ENCODE measurements at regions of chr9 and their contacts with region 1.

Region 1: DNA sequence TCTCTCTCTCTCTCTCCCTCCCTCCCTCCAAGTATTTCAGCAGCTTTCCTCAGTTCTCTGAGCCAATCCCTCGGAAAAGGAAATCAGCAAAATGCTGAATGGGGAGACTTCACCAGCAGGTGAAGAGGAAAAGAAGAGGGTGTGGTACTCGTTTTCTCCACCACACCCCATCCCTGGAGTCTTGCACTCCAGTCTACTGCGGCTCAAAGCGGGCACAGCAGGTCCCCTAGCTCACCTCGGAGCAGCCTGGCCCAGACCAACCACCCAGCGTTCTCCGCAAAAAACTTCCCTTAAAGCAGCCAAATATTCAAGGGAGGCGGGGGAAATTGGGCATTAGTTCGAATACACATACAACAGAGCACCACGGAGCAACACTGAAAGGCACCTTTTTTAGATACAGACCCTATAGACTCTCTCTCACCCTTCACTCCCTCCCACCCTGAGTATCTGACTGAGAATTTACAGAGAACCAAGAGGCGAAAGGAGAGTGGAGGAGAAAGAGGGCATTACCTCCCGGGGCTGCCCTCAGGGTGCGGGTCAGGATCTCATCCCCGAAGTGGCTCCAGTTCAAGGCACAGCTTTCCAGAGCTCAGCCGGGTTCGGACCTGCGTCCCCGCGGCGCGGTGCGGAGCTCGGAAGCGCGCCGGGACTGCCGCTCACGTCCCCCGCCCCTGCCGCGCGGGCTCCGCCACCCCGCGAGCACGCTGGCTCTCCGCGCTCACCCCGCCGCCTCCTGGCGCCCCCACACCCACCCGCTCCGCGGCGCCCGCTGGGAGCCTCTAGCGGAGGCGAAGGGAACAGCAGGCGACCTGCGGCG is 1638.5 kb upstream of the C9orf72 start:
- DNase-seq: peak; percentile 88
- H3K4me3 ChIP-seq: peak overlapping the region; percentile 82
- H3K27ac ChIP-seq: peak overlapping the region; percentile 91
- H3K4me1 ChIP-seq: peaks cover 31% of the 10 kb centered on the region
- H3K27me3 ChIP-seq: no peaks in the 10 kb centered on the region
- CTCF ChIP-seq: peak; percentile 65

Region 2: GRCh38 chr9:27726244-27727081 is 1485.3 kb before region 1 on chr9:
- CTCF ChIA-PET with region 1: no interaction called
- POLR2A ChIA-PET with region 1: no interaction called
- intact Hi-C with region 1: loop called (anchors 10 kb)
- DNase-seq: peak; percentile 88
- H3K4me3 ChIP-seq: no peak overlapping the region
- H3K27ac ChIP-seq: no peak overlapping the region
- H3K4me1 ChIP-seq: peaks cover 10% of the 10 kb centered on the region
- H3K27me3 ChIP-seq: peaks cover 3% of the 10 kb centered on the region
- CTCF ChIP-seq: peak; percentile 88

Region 3: DNA sequence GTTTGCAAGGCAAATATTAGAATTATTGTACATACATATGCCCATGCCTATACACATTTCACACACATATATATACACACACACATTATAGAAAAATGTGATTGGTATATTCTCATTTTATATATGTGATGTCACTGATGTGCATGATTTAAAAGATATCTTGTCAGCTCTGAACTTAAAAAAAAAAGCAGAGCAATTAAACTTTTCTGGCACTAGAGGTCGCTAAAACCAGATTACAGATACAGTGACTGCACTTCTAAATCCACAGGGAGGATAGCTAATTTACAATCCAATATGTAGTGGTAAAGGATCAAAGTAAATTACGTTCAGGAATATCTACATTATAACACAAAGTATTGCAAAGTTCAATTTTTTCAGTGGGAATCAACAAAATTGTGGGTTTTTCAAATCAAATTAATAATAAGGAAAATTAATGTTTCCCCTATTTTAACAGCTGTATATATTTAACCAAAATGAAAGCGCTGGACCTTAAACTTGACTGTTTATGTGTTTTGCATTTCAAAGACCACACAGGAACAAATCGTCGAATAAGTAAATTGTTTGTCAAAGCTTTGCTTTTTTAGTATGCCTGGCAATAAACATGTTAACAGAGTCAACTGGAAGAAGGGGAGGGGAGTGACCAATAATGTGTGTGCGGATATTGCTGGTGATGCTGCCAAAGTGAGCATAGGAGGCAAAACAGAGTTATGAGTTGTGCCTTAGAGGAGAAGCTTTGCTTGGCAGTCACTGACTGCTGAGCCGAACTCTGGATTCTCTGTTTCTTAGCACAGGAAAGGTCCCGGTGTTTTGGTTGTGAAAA is 437.2 kb before region 1 on chr9:
- CTCF ChIA-PET with region 1: interaction called, 3 read pairs
- POLR2A ChIA-PET with region 1: no interaction called
- intact Hi-C with region 1: loop called (anchors 5 kb)
- DNase-seq: peak; percentile 79
- H3K4me3 ChIP-seq: no peak overlapping the region
- H3K27ac ChIP-seq: peak overlapping the region; percentile 14
- H3K4me1 ChIP-seq: peaks cover 43% of the 10 kb centered on the region
- H3K27me3 ChIP-seq: no peaks in the 10 kb centered on the region
- CTCF ChIP-seq: peak; percentile 80

Region 4: DNA sequence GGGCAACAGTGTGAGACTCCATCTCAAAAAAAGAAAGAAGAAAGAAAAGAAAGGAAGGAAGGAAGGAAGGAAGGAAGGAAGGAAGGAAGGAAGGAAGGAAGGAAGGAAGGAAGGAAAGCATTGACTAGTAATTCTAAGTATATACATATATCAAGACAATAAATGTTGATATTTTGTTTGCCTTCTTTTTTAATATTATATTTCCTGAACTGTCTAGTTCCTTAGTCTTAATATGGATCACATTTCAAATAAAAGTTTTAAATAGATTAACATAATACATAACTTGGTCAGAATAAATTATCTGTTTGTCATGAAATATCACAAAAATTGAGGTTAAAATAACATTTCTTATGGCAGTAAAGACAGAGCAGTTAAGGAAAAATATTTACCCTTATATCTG is 190.2 kb before region 1 on chr9:
- CTCF ChIA-PET with region 1: no interaction called
- POLR2A ChIA-PET with region 1: no interaction called
- intact Hi-C with region 1: loop called (anchors 1 kb)
- DNase-seq: peak; percentile 84
- H3K4me3 ChIP-seq: peak overlapping the region; percentile 17
- H3K27ac ChIP-seq: peak overlapping the region; percentile 95
- H3K4me1 ChIP-seq: peaks cover 70% of the 10 kb centered on the region
- H3K27me3 ChIP-seq: no peaks in the 10 kb centered on the region
- CTCF ChIP-seq: no peak

Region 5: GRCh38 chr9:29556317-29556716 is 344.5 kb after region 1 on chr9:
- CTCF ChIA-PET with region 1: no interaction called
- POLR2A ChIA-PET with region 1: no interaction called
- intact Hi-C with region 1: loop called (anchors 5 kb)
- DNase-seq: peak; percentile 94
- H3K4me3 ChIP-seq: no peak overlapping the region
- H3K27ac ChIP-seq: peak overlapping the region; percentile 81
- H3K4me1 ChIP-seq: peaks cover 20% of the 10 kb centered on the region
- H3K27me3 ChIP-seq: no peaks in the 10 kb centered on the region
- CTCF ChIP-seq: no peak

Region 6: DNA sequence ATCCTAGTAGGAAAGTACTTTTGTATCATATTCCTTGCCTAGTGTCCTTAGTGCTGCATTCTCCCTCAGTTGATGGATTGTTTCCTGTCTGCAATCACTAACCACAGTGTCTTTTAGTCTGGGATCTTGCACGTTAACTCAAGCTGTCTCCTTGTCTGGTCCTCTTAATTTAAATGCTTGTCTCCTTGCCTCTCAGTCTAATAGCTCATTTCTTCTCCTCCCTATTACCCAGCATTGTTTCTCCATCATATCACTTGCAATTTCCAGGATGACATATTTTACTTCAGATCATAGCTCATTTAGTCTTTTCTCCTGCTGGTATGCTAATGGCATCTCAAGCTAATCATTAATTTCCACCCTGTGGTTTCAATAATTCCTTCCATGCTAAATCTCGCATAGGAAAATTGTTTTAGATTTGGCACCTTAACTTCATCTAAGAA is 413.5 kb after region 1 on chr9:
- CTCF ChIA-PET with region 1: no interaction called
- POLR2A ChIA-PET with region 1: no interaction called
- intact Hi-C with region 1: loop called (anchors 5 kb)
- DNase-seq: peak; percentile 98
- H3K4me3 ChIP-seq: no peak overlapping the region
- H3K27ac ChIP-seq: peak overlapping the region; percentile 27
- H3K4me1 ChIP-seq: peaks cover 29% of the 10 kb centered on the region
- H3K27me3 ChIP-seq: no peaks in the 10 kb centered on the region
- CTCF ChIP-seq: no peak

Region 7: GRCh38 chr9:29691758-29692407 is 480.1 kb after region 1 on chr9:
- CTCF ChIA-PET with region 1: no interaction called
- POLR2A ChIA-PET with region 1: no interaction called
- intact Hi-C with region 1: loop called (anchors 5 kb)
- DNase-seq: peak; percentile 89
- H3K4me3 ChIP-seq: no peak overlapping the region
- H3K27ac ChIP-seq: no peak overlapping the region
- H3K4me1 ChIP-seq: peaks cover 12% of the 10 kb centered on the region
- H3K27me3 ChIP-seq: no peaks in the 10 kb centered on the region
- CTCF ChIP-seq: peak; percentile 73